B cell (primary cell): ENCODE measurements at regions of chr19 and their contacts with region 1.

Region 1: DNA sequence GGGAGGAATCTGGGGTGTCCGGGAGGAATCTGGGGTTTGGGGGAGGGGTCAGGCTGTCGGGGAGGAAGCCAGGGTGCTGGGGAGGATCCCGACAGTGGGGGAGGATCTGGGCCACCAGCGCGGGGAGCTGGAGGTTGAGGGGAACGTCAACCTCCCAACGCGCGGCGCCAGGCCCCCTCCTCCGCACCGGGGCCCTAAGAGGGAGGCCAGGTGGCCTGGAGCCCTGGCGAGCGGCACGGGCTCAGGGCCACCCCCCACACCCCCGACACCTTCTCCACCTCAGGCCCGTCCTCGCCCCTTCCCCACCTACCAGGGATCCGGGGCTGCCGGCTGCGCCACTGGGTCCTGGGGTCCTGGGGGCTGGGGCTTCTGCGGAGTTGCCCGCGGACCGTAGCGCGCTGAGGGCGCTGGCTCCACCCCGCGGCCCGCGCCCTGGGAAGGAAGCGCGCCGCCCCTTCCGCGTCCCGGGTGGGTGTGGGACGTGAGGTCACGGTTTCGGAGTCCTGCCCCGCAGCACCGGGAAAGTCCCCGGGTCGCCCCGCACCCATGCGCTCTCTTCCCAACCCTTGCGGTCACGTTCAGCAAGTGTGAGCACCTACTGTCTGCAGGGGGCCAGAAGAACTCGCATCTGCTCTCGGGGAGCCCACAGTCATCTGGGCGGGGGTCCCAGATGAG is at the start of gene TICAM1:
- DNase-seq: peak; percentile 91
- ATAC-seq: peak; percentile 80
- H3K4me3 ChIP-seq: peak within 1 kb of the TSS; percentile 84 to 96 (median 89)
- H3K4me3 Mint-ChIP-seq: peak within 1 kb of the TSS; percentile 93
- H3K27ac ChIP-seq: peak within 1 kb of the TSS; percentile 91 to 92
- H3K27ac Mint-ChIP-seq: peak within 1 kb of the TSS; percentile 93
- H3K4me1 ChIP-seq: peaks cover 17 to 41% of the 10 kb centered on the region in 2 donors
- H3K4me1 Mint-ChIP-seq: peaks cover 30% of the 10 kb centered on the region
- H3K27me3 ChIP-seq: no peaks in the 10 kb centered on the region
- H3K27me3 Mint-ChIP-seq: no peaks in the 10 kb centered on the region
- CTCF ChIP-seq: no peak
- total RNA-seq, gene TICAM1: 18.1 and 19.7 TPM in 2 replicates

Region 2: GRCh38 chr19:4597975-4598671 is 233.3 kb before region 1 on chr19:
- CTCF ChIA-PET with region 1: no interaction called
- POLR2A ChIA-PET with region 1: no interaction called
- intact Hi-C with region 1: no loop called
- DNase-seq: peak; percentile 65
- ATAC-seq: peak; percentile 59
- H3K4me3 ChIP-seq: peak overlapping the region in 3 of 5 experiments; percentile 27 to 38 (median 28)
- H3K4me3 Mint-ChIP-seq: peak overlapping the region; percentile 77
- H3K27ac ChIP-seq: no peak overlapping the region
- H3K27ac Mint-ChIP-seq: no peak overlapping the region
- H3K4me1 ChIP-seq: peaks cover 15% of the 10 kb centered on the region in 2 donors
- H3K4me1 Mint-ChIP-seq: peaks cover 12% of the 10 kb centered on the region
- H3K27me3 ChIP-seq: peaks cover 0 to 35% (median 18%) of the 10 kb centered on the region in 4 experiments
- H3K27me3 Mint-ChIP-seq: peaks cover 34% of the 10 kb centered on the region
- CTCF ChIP-seq: no peak

Region 3: GRCh38 chr19:4851551-4852290 is 20.3 kb after region 1 on chr19:
- CTCF ChIA-PET with region 1: interaction called, 23 read pairs
- POLR2A ChIA-PET with region 1: no interaction called
- intact Hi-C with region 1: no loop called
- DNase-seq: peak; percentile 82
- ATAC-seq: peak; percentile 89
- H3K4me3 ChIP-seq: no peak overlapping the region
- H3K4me3 Mint-ChIP-seq: peak overlapping the region; percentile 35
- H3K27ac ChIP-seq: no peak overlapping the region
- H3K27ac Mint-ChIP-seq: no peak overlapping the region
- H3K4me1 ChIP-seq: peaks cover 0 to 13% of the 10 kb centered on the region in 2 donors
- H3K4me1 Mint-ChIP-seq: peaks cover 9% of the 10 kb centered on the region
- H3K27me3 ChIP-seq: no peaks in the 10 kb centered on the region
- H3K27me3 Mint-ChIP-seq: no peaks in the 10 kb centered on the region
- CTCF ChIP-seq: peak; percentile 85

Region 4: DNA sequence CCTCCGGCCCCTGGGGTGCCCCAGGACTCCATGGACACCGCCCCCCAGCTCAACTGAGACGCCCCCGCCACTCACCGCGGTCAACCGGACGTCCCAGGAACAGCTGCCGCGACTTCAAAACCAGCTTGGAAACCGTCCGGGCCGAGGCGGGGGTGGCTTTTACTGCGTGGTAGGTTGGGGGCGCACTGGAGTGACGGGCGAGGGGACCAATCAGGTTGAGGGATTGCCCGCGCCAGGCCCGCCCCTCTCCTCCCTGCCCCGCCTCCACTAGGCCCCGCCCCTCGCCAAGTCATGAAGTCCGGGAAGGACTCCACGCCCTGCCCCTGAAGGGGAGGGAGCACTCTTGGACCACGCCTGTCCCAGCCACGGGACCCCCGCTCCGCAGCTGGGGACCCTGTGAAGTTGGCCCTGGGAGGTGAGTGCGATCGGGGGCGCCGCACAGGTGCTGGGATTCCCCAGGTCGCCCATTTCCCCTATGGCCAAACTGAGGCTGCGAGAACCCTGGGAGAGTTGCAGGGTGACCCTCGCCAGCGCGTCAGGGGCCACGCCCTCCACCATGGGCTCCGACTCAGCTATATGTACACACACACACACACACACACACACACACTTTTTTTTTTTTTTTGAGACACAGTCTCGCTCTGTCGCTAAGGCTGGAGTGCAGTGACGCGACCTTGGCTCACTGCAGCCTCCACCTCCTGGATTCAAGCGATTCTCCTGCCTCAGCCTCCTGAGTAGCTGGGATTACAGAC is 36.3 kb after region 1 on chr19 and contains the start of gene PLIN3:
- CTCF ChIA-PET with region 1: interaction called, 3 read pairs
- POLR2A ChIA-PET with region 1: interaction called, 11 read pairs
- intact Hi-C with region 1: no loop called
- DNase-seq: peak; percentile 94
- ATAC-seq: peak; percentile 95
- H3K4me3 ChIP-seq: peak within 1 kb of the TSS; percentile 66 to 87 (median 80)
- H3K4me3 Mint-ChIP-seq: peak within 1 kb of the TSS; percentile 88
- H3K27ac ChIP-seq: peak within 1 kb of the TSS; percentile 56 to 77
- H3K27ac Mint-ChIP-seq: peak within 1 kb of the TSS; percentile 82
- H3K4me1 ChIP-seq: peaks cover 6 to 28% of the 10 kb centered on the region in 2 donors
- H3K4me1 Mint-ChIP-seq: peaks cover 22% of the 10 kb centered on the region
- H3K27me3 ChIP-seq: no peaks in the 10 kb centered on the region
- H3K27me3 Mint-ChIP-seq: peaks cover 2% of the 10 kb centered on the region
- CTCF ChIP-seq: no peak
- total RNA-seq, gene PLIN3: 26.5 and 34.3 TPM in 2 replicates

Region 5: DNA sequence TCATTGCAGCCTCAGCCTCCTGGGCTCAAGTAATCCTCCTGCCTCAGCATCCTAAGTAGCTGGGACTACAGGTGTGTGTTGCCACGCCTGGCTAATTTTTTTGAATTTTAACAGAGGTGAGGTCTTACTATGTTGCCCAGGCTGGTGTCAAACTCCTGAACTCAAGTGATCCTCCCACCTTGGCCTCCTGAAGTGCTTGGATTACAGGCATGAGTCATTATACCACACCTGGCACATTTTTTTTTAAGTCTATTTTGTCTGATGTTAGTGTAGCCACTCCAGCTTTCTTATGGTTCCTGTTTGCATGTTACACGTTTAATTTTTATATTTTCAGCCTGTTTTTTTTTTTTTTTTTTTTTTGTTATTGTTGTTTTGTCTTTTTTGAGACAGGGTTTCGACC is 162.2 kb after region 1 on chr19:
- CTCF ChIA-PET with region 1: no interaction called
- POLR2A ChIA-PET with region 1: no interaction called
- intact Hi-C with region 1: no loop called
- DNase-seq: no peak
- ATAC-seq: no peak
- H3K4me3 ChIP-seq: no peak overlapping the region
- H3K4me3 Mint-ChIP-seq: no peak overlapping the region
- H3K27ac ChIP-seq: no peak overlapping the region
- H3K27ac Mint-ChIP-seq: no peak overlapping the region
- H3K4me1 ChIP-seq: no peaks in the 10 kb centered on the region
- H3K4me1 Mint-ChIP-seq: peaks cover 12% of the 10 kb centered on the region
- H3K27me3 ChIP-seq: no peaks in the 10 kb centered on the region
- H3K27me3 Mint-ChIP-seq: no peaks in the 10 kb centered on the region
- CTCF ChIP-seq: no peak

Region 6: GRCh38 chr19:5062195-5062594 is 230.8 kb after region 1 on chr19:
- CTCF ChIA-PET with region 1: no interaction called
- POLR2A ChIA-PET with region 1: interaction called, 10 read pairs
- intact Hi-C with region 1: no loop called
- DNase-seq: no peak
- ATAC-seq: no peak
- H3K4me3 ChIP-seq: no peak overlapping the region
- H3K4me3 Mint-ChIP-seq: no peak overlapping the region
- H3K27ac ChIP-seq: no peak overlapping the region
- H3K27ac Mint-ChIP-seq: no peak overlapping the region
- H3K4me1 ChIP-seq: no peaks in the 10 kb centered on the region
- H3K4me1 Mint-ChIP-seq: no peaks in the 10 kb centered on the region
- H3K27me3 ChIP-seq: no peaks in the 10 kb centered on the region
- H3K27me3 Mint-ChIP-seq: no peaks in the 10 kb centered on the region
- CTCF ChIP-seq: no peak